Naive thymus-derived CD4-positive, alpha-beta T cell (primary cell): ENCODE measurements at regions of chr3 and their contacts with region 1.

Region 1: DNA sequence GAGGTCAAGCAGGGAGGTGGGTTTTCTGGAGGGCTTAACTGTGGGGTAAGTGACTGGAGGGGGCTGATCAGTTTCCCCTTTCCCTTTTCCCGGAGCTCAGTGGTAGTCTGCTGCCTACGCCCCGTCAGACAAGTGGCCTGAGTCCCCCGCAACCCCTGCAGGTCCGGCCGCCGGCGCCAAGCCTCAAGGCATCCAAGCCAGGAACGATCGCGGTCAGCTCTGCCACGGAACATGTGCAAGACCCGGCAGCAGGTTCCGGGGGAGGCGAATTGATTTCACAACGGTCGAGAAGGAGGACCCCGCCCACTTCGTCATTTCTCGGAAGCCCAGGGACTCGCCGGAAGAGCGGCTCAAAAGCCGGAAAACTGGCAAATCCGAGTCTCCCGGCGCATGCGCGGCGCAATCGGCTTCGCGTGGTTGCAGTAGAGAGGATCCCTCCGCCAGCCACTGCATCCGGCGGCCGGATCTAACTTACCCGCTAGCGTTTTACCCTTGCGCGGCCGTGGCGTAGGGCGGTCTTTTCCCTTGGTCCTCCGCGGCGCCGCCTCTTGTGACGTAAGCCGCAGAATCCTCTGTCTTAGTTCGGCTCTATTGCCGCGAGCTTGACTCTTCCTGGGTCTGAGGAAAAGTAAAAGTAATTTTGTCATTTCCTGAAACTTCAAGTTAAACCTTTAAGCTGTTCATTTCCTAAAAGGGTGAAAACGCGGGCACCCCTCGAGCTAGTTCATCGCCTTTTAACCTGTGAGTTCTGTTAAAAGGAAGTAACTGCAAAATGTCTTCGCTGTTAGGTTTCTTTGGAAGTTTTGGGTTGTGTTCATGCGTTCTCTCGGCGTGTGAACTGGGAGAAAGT is 14.9 kb upstream of the CCNL1 start:
- DNase-seq: peak; percentile 89 to 99 (median 99)
- ATAC-seq: peak; percentile 97
- H3K4me3 ChIP-seq: peak overlapping the region; percentile 81
- H3K4me3 Mint-ChIP-seq: peak overlapping the region; percentile 86 to 99 (median 93)
- H3K27ac ChIP-seq: peak overlapping the region; percentile 97
- H3K27ac Mint-ChIP-seq: peak overlapping the region; percentile 91 to 100 (median 98)
- H3K4me1 ChIP-seq: peaks cover 17 to 25% of the 10 kb centered on the region in 2 donors
- H3K4me1 Mint-ChIP-seq: peaks cover 14 to 45% (median 35%) of the 10 kb centered on the region in 7 donors
- H3K27me3 ChIP-seq: no peaks in the 10 kb centered on the region
- H3K27me3 Mint-ChIP-seq: peaks cover 0 to 8% (median 0%) of the 10 kb centered on the region in 5 donors

Region 2: DNA sequence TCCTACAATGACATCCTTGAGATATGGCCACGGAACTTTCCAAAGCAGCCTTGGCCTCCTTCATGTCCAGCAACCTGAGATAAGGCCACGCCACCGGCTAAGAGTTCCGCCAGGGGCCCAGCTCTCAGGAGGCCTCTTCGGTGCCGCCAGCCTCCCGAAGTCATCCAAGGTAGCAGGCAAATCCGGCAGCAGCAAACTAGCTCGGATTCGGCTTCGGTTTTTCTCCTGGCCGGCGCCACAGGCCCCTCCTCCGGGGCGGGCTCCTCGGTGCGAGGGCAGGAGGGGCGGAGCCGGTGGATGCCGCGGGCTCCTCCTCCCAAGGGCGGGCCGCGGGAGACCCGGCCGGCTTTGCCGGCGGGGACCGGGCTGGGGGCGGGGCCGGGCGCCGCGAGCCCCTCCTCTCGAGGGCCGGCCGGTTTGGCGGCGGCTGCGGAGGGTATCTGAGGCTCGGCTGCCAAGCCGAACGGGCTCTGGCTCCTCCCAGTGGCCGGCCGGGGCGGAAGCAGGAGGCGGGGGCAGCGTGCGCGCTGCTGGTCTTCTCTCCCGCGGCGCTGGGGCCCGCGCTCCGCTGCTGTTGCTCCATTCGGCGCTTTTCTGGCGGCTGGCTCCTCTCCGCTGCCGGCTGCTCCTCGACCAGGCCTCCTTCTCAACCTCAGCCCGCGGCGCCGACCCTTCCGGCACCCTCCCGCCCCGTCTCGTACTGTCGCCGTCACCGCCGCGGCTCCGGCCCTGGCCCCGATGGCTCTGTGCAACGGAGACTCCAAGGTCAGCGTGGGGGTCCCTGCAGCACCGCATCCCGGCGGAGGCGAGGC is 1304.5 kb before region 1 on chr3 and contains the start of gene GMPS:
- CTCF ChIA-PET with region 1: no interaction called
- POLR2A ChIA-PET with region 1: interaction called, 4 read pairs
- intact Hi-C with region 1: loop called (anchors 1 kb)
- DNase-seq: peak; percentile 87 to 98 (median 96)
- ATAC-seq: peak; percentile 97
- H3K4me3 ChIP-seq: peak within 1 kb of the TSS; percentile 90
- H3K4me3 Mint-ChIP-seq: peak within 1 kb of the TSS; percentile 92 to 100 (median 98)
- H3K27ac ChIP-seq: peak within 1 kb of the TSS; percentile 94
- H3K27ac Mint-ChIP-seq: peak within 1 kb of the TSS; percentile 89 to 97 (median 96)
- H3K4me1 ChIP-seq: peaks cover 8% of the 10 kb centered on the region in 2 donors
- H3K4me1 Mint-ChIP-seq: peaks cover 17 to 35% (median 26%) of the 10 kb centered on the region in 7 donors
- H3K27me3 ChIP-seq: no peaks in the 10 kb centered on the region
- H3K27me3 Mint-ChIP-seq: no peaks in the 10 kb centered on the region
- total RNA-seq, gene GMPS: 36.3 to 85.1 (median 45.4) TPM

Region 3: DNA sequence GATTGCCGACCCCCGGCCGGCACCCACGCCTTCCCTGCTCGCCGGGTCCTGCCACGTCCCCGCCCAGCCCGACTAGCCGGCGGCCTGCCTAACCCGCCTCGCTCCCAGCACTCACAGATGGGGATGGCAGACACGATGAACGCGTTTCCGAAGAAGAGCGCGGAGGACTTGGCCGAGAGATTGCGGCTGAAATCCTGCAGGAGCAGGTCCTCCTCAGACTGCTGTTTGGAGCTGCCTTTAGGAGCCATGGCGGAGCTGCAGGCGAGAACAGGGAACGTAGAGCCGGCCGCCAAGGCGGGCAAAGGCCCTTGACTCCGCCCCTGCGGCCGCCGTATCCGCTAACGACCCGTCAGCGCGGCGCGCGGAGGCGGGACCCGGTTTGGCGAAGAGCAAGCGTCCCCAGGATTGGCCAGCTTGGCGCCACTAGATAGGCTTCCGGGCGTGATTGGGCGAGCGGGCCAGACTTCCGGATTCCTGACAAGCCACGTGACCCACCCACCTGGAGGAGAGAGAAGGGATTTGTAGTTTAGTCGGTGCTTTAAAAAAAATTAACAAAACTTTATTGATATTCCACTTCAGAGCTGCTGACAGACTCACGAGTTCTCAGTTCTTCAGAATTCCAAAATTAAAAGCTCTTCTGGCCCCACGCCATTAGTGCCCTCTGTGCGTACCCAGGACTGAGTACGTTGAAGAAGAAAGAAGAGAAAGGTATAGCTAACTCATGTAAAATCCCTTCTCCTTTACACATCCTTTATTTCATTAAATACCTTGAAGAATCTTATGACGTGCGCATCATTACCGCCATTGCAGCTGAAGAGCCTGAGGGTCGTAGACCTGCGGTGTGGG is 619.8 kb before region 1 on chr3 and contains the start of gene SSR3:
- CTCF ChIA-PET with region 1: no interaction called
- POLR2A ChIA-PET with region 1: interaction called, 23 read pairs
- intact Hi-C with region 1: loop called (anchors 1 kb)
- DNase-seq: peak; percentile 95 to 99 (median 98)
- ATAC-seq: peak; percentile 100
- H3K4me3 ChIP-seq: peak within 1 kb of the TSS; percentile 95
- H3K4me3 Mint-ChIP-seq: peak within 1 kb of the TSS; percentile 88 to 98 (median 97)
- H3K27ac ChIP-seq: peak within 1 kb of the TSS; percentile 85
- H3K27ac Mint-ChIP-seq: peak within 1 kb of the TSS; percentile 89 to 96 (median 92)
- H3K4me1 ChIP-seq: peaks cover 16% of the 10 kb centered on the region in 2 donors
- H3K4me1 Mint-ChIP-seq: peaks cover 29 to 57% (median 50%) of the 10 kb centered on the region in 7 donors
- H3K27me3 ChIP-seq: no peaks in the 10 kb centered on the region
- H3K27me3 Mint-ChIP-seq: no peaks in the 10 kb centered on the region
- total RNA-seq, gene SSR3: 56.0 to 158 (median 76.2) TPM

Region 4: GRCh38 chr3:157130467-157131251 is 44.2 kb before region 1 on chr3:
- CTCF ChIA-PET with region 1: interaction called, 3 read pairs
- POLR2A ChIA-PET with region 1: interaction called, 4 read pairs
- intact Hi-C with region 1: loop called (anchors 1 to 2 kb)
- DNase-seq: peak; percentile 43 to 86 (median 80)
- ATAC-seq: peak; percentile 78
- H3K4me3 ChIP-seq: peak overlapping the region; percentile 35
- H3K4me3 Mint-ChIP-seq: peak overlapping the region; percentile 61 to 84 (median 74)
- H3K27ac ChIP-seq: peak overlapping the region; percentile 80
- H3K27ac Mint-ChIP-seq: peak overlapping the region; percentile 93 to 99 (median 97)
- H3K4me1 ChIP-seq: peaks cover 44 to 69% of the 10 kb centered on the region in 2 donors
- H3K4me1 Mint-ChIP-seq: peaks cover 34 to 89% (median 60%) of the 10 kb centered on the region in 7 donors
- H3K27me3 ChIP-seq: no peaks in the 10 kb centered on the region
- H3K27me3 Mint-ChIP-seq: no peaks in the 10 kb centered on the region

Region 5: GRCh38 chr3:157159762-157160657 is 14.9 kb before region 1 on chr3 and contains the start of gene CCNL1:
- CTCF ChIA-PET with region 1: interaction called, 27 read pairs
- POLR2A ChIA-PET with region 1: interaction called, 520 read pairs
- intact Hi-C with region 1: loop called (anchors 1 kb)
- DNase-seq: peak; percentile 94 to 98 (median 97)
- ATAC-seq: peak; percentile 88
- H3K4me3 ChIP-seq: peak within 1 kb of the TSS; percentile 92
- H3K4me3 Mint-ChIP-seq: peak within 1 kb of the TSS; percentile 91 to 100 (median 96)
- H3K27ac ChIP-seq: peak within 1 kb of the TSS; percentile 97
- H3K27ac Mint-ChIP-seq: peak within 1 kb of the TSS; percentile 96 to 100 (median 98)
- H3K4me1 ChIP-seq: peaks cover 39 to 45% of the 10 kb centered on the region in 2 donors
- H3K4me1 Mint-ChIP-seq: peaks cover 37 to 69% (median 65%) of the 10 kb centered on the region in 7 donors
- H3K27me3 ChIP-seq: no peaks in the 10 kb centered on the region
- H3K27me3 Mint-ChIP-seq: no peaks in the 10 kb centered on the region
- total RNA-seq, gene CCNL1: 230 to 1,170 (median 374) TPM

Region 6: DNA sequence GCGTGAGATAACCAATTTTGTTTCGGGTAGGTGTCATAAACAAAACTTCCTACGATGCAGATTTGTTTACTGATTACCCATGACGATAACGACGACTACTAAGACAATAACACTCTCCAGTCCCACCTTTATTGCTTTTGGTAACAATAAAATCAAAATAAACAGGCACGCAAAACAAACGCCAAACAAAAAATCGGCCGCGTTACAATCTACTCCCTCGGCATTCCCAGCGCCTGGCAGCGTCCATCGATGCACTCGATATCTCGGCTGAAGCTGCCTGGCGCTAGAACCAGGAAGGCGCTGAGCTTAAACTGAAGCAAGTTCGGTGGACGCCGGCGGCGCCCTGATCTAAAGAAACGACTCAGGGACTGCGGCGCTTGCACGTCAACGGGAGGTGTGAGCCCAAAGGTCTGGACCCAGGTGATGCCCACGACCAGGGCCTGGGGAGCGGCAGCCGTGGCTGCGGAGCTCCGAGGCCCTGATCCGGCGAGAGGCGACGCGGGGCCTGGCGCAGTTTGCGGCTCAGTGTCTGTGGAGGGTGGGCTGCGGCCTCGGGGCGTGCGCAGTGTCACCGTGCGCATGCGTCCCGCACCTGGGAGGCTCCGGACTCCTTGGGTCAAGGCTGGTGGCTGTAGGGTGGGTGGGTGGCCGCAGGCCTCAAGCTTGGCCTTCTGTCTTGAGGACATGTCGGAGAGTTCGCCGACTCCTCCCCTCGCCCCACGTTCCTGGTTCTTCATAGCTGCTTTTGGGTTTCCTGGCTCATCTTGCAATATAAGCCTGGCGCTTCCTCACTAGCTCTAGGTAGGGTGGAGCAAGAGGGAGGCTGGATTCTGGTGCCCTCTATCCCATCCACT is 935.2 kb after region 1 on chr3 and contains the start of gene RSRC1:
- CTCF ChIA-PET with region 1: no interaction called
- POLR2A ChIA-PET with region 1: no interaction called
- intact Hi-C with region 1: loop called (anchors 5 to 10 kb)
- DNase-seq: peak; percentile 42 to 81 (median 73)
- ATAC-seq: peak; percentile 96
- H3K4me3 ChIP-seq: peak within 1 kb of the TSS; percentile 90
- H3K4me3 Mint-ChIP-seq: peak within 1 kb of the TSS; percentile 91 to 100 (median 98)
- H3K27ac ChIP-seq: peak within 1 kb of the TSS; percentile 61
- H3K27ac Mint-ChIP-seq: peak within 1 kb of the TSS; percentile 61 to 96 (median 88)
- H3K4me1 ChIP-seq: peaks cover 26 to 37% of the 10 kb centered on the region in 2 donors
- H3K4me1 Mint-ChIP-seq: peaks cover 39 to 84% (median 65%) of the 10 kb centered on the region in 7 donors
- H3K27me3 ChIP-seq: peaks cover 18 to 34% of the 10 kb centered on the region in 2 donors
- H3K27me3 Mint-ChIP-seq: peaks cover 34 to 45% (median 39%) of the 10 kb centered on the region in 5 donors
- total RNA-seq, gene RSRC1: 30.0 to 45.0 (median 37.4) TPM